Activated T-helper 1 cell treated with anti-CD3 and anti-CD28 coated beads, Interleukin-12 subunit alpha, Interleukin-12 subunit beta, Interleukin-2, Interleukin-4 antibody, amounts not matched to agents 30 ng/mL and 10 ng/mL and 1 ng/mL, durations not matched to agents 14 hours and 24 hours and 36 hours (primary cell): ENCODE measurements at regions of chr9 and their contacts with region 1.

Region 1: GRCh38 chr9:89701221-89701798 is 96.5 kb downstream of the GADD45G start:
- DNase-seq: peak; percentile 82
- H3K4me3 Mint-ChIP-seq: peak overlapping the region; percentile 92
- H3K27ac Mint-ChIP-seq: peak overlapping the region; percentile 97
- H3K4me1 Mint-ChIP-seq: peaks cover 98% of the 10 kb centered on the region
- H3K27me3 Mint-ChIP-seq: no peaks in the 10 kb centered on the region

Region 2: GRCh38 chr9:89418882-89419640 is 282.2 kb before region 1 on chr9:
- intact Hi-C with region 1: loop called (anchors 5 kb)
- DNase-seq: peak; percentile 65
- H3K4me3 Mint-ChIP-seq: peak overlapping the region; percentile 92
- H3K27ac Mint-ChIP-seq: peak overlapping the region; percentile 100
- H3K4me1 Mint-ChIP-seq: peaks cover 99% of the 10 kb centered on the region
- H3K27me3 Mint-ChIP-seq: no peaks in the 10 kb centered on the region

Region 3: DNA sequence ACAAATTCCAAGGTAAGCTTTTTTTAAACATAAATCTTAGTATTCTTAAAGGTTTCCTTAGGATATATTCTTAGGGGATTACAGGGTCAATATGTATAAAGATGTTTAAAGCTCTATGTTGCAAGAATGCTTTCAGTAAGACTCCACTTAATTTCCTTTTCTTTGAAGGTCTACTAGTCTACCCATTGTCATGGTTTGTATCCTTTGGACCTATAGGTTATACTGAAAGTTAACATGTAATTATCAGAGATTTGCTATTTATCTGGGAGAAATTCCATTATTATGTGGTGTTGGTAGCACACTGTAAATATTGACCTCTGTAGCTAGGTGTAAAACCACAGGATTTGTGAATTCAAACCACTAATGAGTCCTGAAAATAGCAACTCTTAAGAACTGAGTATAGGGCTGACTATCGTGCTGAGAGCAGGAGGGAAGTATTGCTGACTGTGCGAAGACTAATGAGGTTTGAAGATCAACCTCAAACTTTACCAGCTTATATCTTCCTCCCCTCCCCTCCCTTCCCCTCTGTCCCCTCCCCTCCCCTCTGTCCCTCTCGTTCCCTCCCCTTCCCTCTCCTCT is 10.9 kb before region 1 on chr9:
- intact Hi-C with region 1: loop called (anchors 1 kb)
- DNase-seq: no peak
- H3K4me3 Mint-ChIP-seq: peak overlapping the region; percentile 35
- H3K27ac Mint-ChIP-seq: peak overlapping the region; percentile 75
- H3K4me1 Mint-ChIP-seq: peaks cover 52% of the 10 kb centered on the region
- H3K27me3 Mint-ChIP-seq: no peaks in the 10 kb centered on the region

Region 4: GRCh38 chr9:89743573-89744361 is 42.5 kb after region 1 on chr9:
- intact Hi-C with region 1: loop called (anchors 1 kb)
- DNase-seq: peak; percentile 75
- H3K4me3 Mint-ChIP-seq: peak overlapping the region; percentile 25
- H3K27ac Mint-ChIP-seq: peak overlapping the region; percentile 82
- H3K4me1 Mint-ChIP-seq: peaks cover 90% of the 10 kb centered on the region
- H3K27me3 Mint-ChIP-seq: no peaks in the 10 kb centered on the region

Region 5: GRCh38 chr9:89770531-89771174 is 69.3 kb after region 1 on chr9:
- intact Hi-C with region 1: no loop called
- DNase-seq: no peak
- H3K4me3 Mint-ChIP-seq: no peak overlapping the region
- H3K27ac Mint-ChIP-seq: no peak overlapping the region
- H3K4me1 Mint-ChIP-seq: peaks cover 29% of the 10 kb centered on the region
- H3K27me3 Mint-ChIP-seq: peaks cover 7% of the 10 kb centered on the region

Region 6: DNA sequence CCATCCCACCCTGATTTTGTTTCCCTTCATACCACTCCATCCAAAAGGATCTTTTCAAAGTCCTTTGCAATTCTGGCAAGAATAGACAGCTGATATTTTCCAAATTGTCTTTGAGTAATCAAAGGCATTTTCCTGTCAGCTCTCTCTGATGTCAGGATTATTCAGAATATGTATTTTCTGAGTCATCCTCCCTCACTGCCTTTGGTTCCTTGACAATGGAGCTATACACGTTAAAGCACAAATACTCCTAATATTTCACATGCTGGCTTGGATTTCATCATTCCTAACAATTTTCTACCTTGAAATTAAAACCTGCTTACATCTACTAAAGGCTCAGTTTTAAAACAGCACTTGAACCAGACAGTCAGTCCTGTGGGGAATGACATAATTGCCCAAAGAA is 282.9 kb after region 1 on chr9:
- intact Hi-C with region 1: loop called (anchors 2 kb)
- DNase-seq: no peak
- H3K4me3 Mint-ChIP-seq: peak overlapping the region; percentile 61
- H3K27ac Mint-ChIP-seq: peak overlapping the region; percentile 93
- H3K4me1 Mint-ChIP-seq: peaks cover 67% of the 10 kb centered on the region
- H3K27me3 Mint-ChIP-seq: peaks cover 2% of the 10 kb centered on the region

Region 7: DNA sequence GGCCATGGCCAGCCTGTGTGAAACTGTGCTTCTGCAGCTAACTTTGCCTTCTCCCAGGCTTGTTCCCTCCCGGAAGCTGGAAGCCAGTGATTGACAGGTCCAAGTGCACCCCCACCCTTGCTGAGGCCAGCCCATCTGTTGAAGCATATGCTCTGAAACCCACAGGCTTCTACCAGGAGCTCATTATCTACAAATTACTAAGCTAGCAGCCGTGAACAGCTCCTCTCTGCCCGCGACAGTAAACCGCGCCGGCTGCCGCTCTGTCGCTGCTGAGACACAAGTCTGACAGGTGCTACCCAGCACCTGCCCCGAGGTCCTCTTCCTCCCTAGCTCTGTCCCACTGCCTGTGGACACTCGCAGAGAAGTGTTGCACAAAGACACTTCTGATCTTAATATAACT is 394.4 kb after region 1 on chr9:
- intact Hi-C with region 1: no loop called
- DNase-seq: no peak
- H3K4me3 Mint-ChIP-seq: no peak overlapping the region
- H3K27ac Mint-ChIP-seq: no peak overlapping the region
- H3K4me1 Mint-ChIP-seq: peaks cover 19% of the 10 kb centered on the region
- H3K27me3 Mint-ChIP-seq: peaks cover 25% of the 10 kb centered on the region